ENCODE measurements at regions of chr19 and their contacts with region 1.

Region 1: DNA sequence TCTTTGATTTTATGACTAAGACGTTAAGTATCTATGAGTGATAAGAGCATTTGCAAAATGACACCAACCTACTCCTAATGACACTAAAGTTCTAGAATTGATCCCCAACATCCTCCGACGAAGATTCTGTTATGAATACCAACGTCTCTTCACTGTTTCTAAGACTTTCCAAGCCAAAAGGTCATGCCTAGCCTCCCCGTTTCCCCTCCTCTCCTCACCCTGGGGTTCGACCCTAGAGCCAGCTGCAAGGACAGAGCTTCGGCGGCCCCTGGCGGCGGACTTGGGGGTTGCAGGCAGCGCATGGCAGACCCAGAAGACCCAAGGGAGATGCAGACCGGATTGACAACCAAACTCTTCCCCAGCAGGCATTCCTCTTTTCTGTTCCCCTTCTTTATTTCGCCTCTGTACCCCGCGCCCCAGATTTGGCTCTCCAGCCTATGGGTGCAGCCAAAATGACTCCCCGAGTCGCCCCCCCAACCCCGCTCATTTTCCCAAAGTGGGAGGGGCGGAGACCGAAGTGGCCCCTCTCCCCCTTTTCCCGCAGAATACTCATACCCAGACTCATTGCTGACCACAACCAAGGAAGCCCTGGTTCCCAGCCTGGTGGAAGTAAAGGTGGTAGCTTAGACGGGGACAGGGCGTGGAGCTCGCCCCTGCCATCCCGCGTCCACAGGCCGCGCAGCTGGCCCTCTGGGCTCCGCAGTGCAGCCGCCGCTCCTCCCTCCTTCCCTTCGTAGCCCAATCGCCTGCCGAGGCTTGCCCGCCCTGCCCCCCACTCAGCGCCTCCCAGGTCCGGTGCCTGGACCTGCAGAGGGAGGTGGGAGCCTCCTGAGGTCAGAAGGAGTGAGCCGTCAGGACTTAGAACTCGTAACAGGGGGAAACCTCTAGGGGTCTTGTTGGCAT is 4.1 kb upstream of the EML2 start:
- DNase-seq: peak; percentile 84
- ATAC-seq: peak; percentile 38
- H3K4me3 ChIP-seq: peak overlapping the region; percentile 53
- H3K27ac ChIP-seq: peak overlapping the region; percentile 74
- H3K4me1 ChIP-seq: peaks cover 33% of the 10 kb centered on the region
- H3K27me3 ChIP-seq: no peaks in the 10 kb centered on the region
- CTCF ChIP-seq: peak; percentile 99 to 100 (median 99)
- EP300 ChIP-seq: peak in 1 of 2 experiments; percentile 17; a peak in 2 of 4 replicates
- POLR2A ChIP-seq: 0 out of 2 replicates have a peak, but pooled peaks have one; percentile 23
- RAD21 ChIP-seq: peak; percentile 99

Region 2: GRCh38 chr19:45059278-45059965 is 583.9 kb before region 1 on chr19:
- CTCF ChIA-PET with region 1: no interaction called
- POLR2A ChIA-PET with region 1: no interaction called
- RAD21 ChIA-PET with region 1: no interaction called
- SMC1A ChIA-PET with region 1: no interaction called
- in situ Hi-C with region 1: no loop called
- intact Hi-C with region 1: no loop called
- DNase-seq: no peak
- ATAC-seq: peak; percentile 97
- H3K4me3 ChIP-seq: no peak overlapping the region
- H3K27ac ChIP-seq: no peak overlapping the region
- H3K4me1 ChIP-seq: no peaks in the 10 kb centered on the region
- H3K27me3 ChIP-seq: no peaks in the 10 kb centered on the region
- CTCF ChIP-seq: peak; percentile 90 to 97 (median 90)
- EP300 ChIP-seq: no peak
- POLR2A ChIP-seq: no peak
- RAD21 ChIP-seq: peak; percentile 93

Region 3: GRCh38 chr19:45439569-45440254 is 203.6 kb before region 1 on chr19:
- CTCF ChIA-PET with region 1: interaction called, 23 read pairs
- POLR2A ChIA-PET with region 1: interaction called, 6 read pairs
- RAD21 ChIA-PET with region 1: interaction called, 9 read pairs
- SMC1A ChIA-PET with region 1: interaction called, 9 read pairs
- in situ Hi-C with region 1: no loop called
- intact Hi-C with region 1: loop called (anchors 5 kb)
- DNase-seq: no peak
- ATAC-seq: peak; percentile 81
- H3K4me3 ChIP-seq: peak overlapping the region; percentile 57
- H3K27ac ChIP-seq: peak overlapping the region; percentile 82
- H3K4me1 ChIP-seq: peaks cover 18% of the 10 kb centered on the region
- H3K27me3 ChIP-seq: no peaks in the 10 kb centered on the region
- CTCF ChIP-seq: peak; percentile 67 to 95 (median 94)
- EP300 ChIP-seq: no peak
- POLR2A ChIP-seq: peak; percentile 59; the same call in 1 of the 2 replicates
- RAD21 ChIP-seq: peak; percentile 77

Region 4: DNA sequence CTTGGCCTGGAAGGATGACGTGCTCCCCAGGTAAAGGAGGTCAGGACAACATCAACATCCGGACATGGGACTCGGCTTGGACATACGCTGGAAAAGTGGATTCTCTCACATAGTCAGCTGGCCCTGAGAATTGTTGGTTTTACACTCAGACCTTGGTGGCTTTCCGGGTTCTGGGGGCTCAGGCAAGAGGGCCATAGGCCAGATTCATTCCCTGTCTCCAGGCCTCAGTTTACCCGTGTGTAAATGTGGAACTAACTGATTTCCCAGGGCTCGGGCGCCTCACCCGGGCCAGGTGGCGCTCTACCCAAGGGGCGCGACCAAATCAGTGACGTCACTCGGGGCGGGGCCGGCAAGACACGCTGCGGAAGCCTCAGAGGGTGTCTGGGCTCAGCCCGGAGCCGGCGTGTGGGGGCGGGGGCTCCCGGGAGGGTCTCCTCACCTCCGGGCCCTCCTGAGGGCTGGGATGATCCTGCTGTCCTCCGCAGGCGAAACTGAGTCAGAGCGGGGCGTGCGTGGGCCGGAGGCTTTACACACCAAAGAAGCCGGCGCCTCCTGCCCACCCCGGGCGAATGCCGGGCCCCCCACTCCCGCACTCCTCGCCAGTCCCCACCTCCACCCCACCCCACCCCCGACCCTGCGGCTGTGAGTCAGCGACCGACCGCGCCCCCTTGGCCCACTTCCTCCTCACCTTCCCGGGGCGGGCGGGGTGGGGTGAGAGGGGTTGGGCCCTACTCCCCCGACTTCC is 136.9 kb before region 1 on chr19:
- CTCF ChIA-PET with region 1: interaction called, 12 read pairs
- POLR2A ChIA-PET with region 1: interaction called, 14 read pairs
- RAD21 ChIA-PET with region 1: interaction called, 5 read pairs
- SMC1A ChIA-PET with region 1: interaction called, 6 read pairs
- in situ Hi-C with region 1: no loop called
- intact Hi-C with region 1: loop called (anchors 5 kb)
- DNase-seq: peak; percentile 64
- ATAC-seq: peak; percentile 74
- H3K4me3 ChIP-seq: peak overlapping the region; percentile 99
- H3K27ac ChIP-seq: peak overlapping the region; percentile 98
- H3K4me1 ChIP-seq: peaks cover 21% of the 10 kb centered on the region
- H3K27me3 ChIP-seq: no peaks in the 10 kb centered on the region
- CTCF ChIP-seq: peak; percentile 56 to 79 (median 70)
- EP300 ChIP-seq: peak in 1 of 2 experiments; percentile 35; a peak in 1 of 4 replicates
- POLR2A ChIP-seq: peak; percentile 87
- RAD21 ChIP-seq: peak; percentile 46; the same call in 1 of the 2 replicates

Region 5: GRCh38 chr19:45558399-45558878 is 84.8 kb before region 1 on chr19:
- CTCF ChIA-PET with region 1: interaction called, 12 read pairs
- POLR2A ChIA-PET with region 1: interaction called, 5 read pairs
- RAD21 ChIA-PET with region 1: interaction called, 8 read pairs
- SMC1A ChIA-PET with region 1: no interaction called
- in situ Hi-C with region 1: no loop called
- intact Hi-C with region 1: no loop called
- DNase-seq: no peak
- ATAC-seq: peak; percentile 90
- H3K4me3 ChIP-seq: no peak overlapping the region
- H3K27ac ChIP-seq: no peak overlapping the region
- H3K4me1 ChIP-seq: peaks cover 13% of the 10 kb centered on the region
- H3K27me3 ChIP-seq: no peaks in the 10 kb centered on the region
- CTCF ChIP-seq: peak; percentile 62 to 83 (median 71)
- EP300 ChIP-seq: no peak
- POLR2A ChIP-seq: no peak
- RAD21 ChIP-seq: peak; percentile 77

Region 6: DNA sequence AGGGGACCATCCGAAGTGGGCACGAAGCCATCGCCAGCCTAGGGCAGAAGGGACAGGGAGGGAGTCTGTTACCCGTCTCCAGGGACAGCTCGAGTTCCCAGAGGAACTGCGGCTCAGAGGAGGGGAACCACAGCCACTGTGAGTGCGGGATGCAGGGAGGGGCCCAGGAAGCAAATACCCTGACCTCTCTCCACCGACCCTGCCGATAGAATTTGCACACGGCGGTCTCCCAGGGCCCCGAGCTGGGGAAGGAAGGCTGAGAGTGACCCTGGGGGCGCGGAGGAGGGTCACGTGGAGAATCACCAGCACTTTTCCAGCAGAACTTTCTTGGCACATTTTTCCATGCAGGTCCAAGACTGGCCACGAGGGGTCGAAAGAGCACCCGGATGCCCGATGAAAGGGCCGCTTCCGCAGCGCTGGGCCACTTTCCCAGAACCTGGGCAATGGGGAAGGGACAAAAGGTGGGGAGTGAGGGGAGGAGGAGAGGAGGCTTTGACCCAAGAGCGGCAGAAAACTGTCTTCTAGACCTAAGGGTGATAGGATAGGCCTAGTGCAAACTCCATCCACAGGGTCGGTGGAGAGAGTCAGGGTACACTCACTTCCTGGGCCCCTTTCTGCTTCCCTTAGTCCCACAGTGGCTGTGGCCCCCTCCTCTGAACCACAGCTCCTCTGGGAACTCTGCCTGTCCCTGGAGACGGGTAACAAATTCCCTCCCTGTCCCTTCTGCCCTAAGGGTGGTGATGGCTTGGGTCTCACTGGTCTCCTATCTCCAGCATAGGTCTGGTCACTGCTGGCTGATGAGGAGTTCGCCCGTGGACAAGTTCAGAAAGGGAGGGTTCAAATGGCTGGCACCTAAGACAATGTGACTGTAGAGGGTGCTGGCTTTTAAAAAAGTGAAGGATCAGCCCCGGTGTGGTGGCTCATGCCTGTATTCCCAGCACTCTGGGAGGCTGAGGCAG is 35.9 kb before region 1 on chr19:
- CTCF ChIA-PET with region 1: interaction called, 43 read pairs
- POLR2A ChIA-PET with region 1: interaction called, 6 read pairs
- RAD21 ChIA-PET with region 1: interaction called, 29 read pairs
- SMC1A ChIA-PET with region 1: interaction called, 27 read pairs
- in situ Hi-C with region 1: no loop called
- intact Hi-C with region 1: loop called (anchors 1 kb)
- DNase-seq: no peak
- ATAC-seq: peak; percentile 80
- H3K4me3 ChIP-seq: no peak overlapping the region
- H3K27ac ChIP-seq: peak overlapping the region; percentile 48
- H3K4me1 ChIP-seq: peaks cover 8% of the 10 kb centered on the region
- H3K27me3 ChIP-seq: peaks cover 0 to under 1% of the 10 kb centered on the region in 2 experiments; a peak in 2 of 4 replicates
- CTCF ChIP-seq: peak; percentile 80 to 85 (median 83)
- EP300 ChIP-seq: no peak
- POLR2A ChIP-seq: no peak
- RAD21 ChIP-seq: peak; percentile 66

Region 7: GRCh38 chr19:45670670-45671453 is 27.6 kb after region 1 on chr19:
- CTCF ChIA-PET with region 1: interaction called, 16 read pairs
- POLR2A ChIA-PET with region 1: interaction called, 20 read pairs
- RAD21 ChIA-PET with region 1: interaction called, 47 read pairs
- SMC1A ChIA-PET with region 1: interaction called, 15 read pairs
- in situ Hi-C with region 1: no loop called
- intact Hi-C with region 1: loop called (anchors 2 kb)
- DNase-seq: peak; percentile 62
- ATAC-seq: peak; percentile 66
- H3K4me3 ChIP-seq: peak overlapping the region; percentile 94
- H3K27ac ChIP-seq: peak overlapping the region; percentile 37; the same call in 1 of the 2 replicates
- H3K4me1 ChIP-seq: peaks cover 9% of the 10 kb centered on the region
- H3K27me3 ChIP-seq: no peaks in the 10 kb centered on the region
- CTCF ChIP-seq: no peak
- EP300 ChIP-seq: no peak
- POLR2A ChIP-seq: no peak
- RAD21 ChIP-seq: no peak

Region 8: GRCh38 chr19:45739498-45740439 is 96.5 kb after region 1 on chr19:
- CTCF ChIA-PET with region 1: no interaction called
- POLR2A ChIA-PET with region 1: no interaction called
- RAD21 ChIA-PET with region 1: no interaction called
- SMC1A ChIA-PET with region 1: no interaction called
- in situ Hi-C with region 1: no loop called
- intact Hi-C with region 1: no loop called
- DNase-seq: no peak
- ATAC-seq: peak; percentile 73
- H3K4me3 ChIP-seq: no peak overlapping the region
- H3K27ac ChIP-seq: no peak overlapping the region
- H3K4me1 ChIP-seq: no peaks in the 10 kb centered on the region
- H3K27me3 ChIP-seq: peaks cover 0 to 2% of the 10 kb centered on the region in 2 experiments; a peak in 2 of 4 replicates
- CTCF ChIP-seq: no peak
- EP300 ChIP-seq: no peak
- POLR2A ChIP-seq: no peak
- RAD21 ChIP-seq: no peak

Region 9: GRCh38 chr19:46000491-46001246 is 357.4 kb after region 1 on chr19:
- CTCF ChIA-PET with region 1: no interaction called
- POLR2A ChIA-PET with region 1: no interaction called
- RAD21 ChIA-PET with region 1: no interaction called
- SMC1A ChIA-PET with region 1: no interaction called
- in situ Hi-C with region 1: no loop called
- intact Hi-C with region 1: no loop called
- DNase-seq: no peak
- ATAC-seq: peak; percentile 98
- H3K4me3 ChIP-seq: peak overlapping the region; percentile 47; the same call in 1 of the 2 replicates
- H3K27ac ChIP-seq: no peak overlapping the region
- H3K4me1 ChIP-seq: peaks cover 14% of the 10 kb centered on the region
- H3K27me3 ChIP-seq: no peaks in the 10 kb centered on the region
- CTCF ChIP-seq: no peak
- EP300 ChIP-seq: no peak
- POLR2A ChIP-seq: no peak
- RAD21 ChIP-seq: no peak

Region 10: DNA sequence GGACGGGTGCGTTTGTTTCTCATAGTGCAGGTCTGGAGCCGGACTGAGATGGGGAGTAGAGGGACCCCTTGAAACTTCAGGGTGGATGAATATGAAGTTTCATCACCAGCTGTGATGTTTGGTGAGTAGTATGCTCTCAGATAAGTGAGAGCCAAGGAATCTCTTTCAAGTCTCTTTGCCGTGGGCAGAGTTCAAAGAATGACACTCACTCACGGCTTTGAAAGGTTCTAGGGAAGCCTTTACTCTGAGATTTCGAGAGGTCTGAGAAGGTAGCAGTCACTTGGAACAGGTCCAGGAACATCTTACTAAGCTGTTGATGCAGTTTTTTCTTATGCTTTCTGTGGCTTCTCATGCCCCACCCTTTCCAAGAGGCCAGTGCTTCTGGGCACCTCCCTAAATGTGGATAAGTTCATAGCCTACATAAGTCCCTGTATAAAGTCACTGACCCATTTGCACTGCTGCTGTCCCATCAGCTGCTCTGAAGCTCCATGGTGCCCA is 504.6 kb after region 1 on chr19 and contains the start of gene IGFL2:
- CTCF ChIA-PET with region 1: no interaction called
- POLR2A ChIA-PET with region 1: no interaction called
- RAD21 ChIA-PET with region 1: no interaction called
- SMC1A ChIA-PET with region 1: no interaction called
- in situ Hi-C with region 1: no loop called
- intact Hi-C with region 1: no loop called
- DNase-seq: no peak
- ATAC-seq: no peak
- H3K4me3 ChIP-seq: no peak within 1 kb of the TSS
- H3K27ac ChIP-seq: no peak within 1 kb of the TSS
- H3K4me1 ChIP-seq: no peaks in the 10 kb centered on the region
- H3K27me3 ChIP-seq: peaks cover 0 to 4% of the 10 kb centered on the region in 2 experiments; a peak in 1 of 4 replicates
- CTCF ChIP-seq: no peak
- EP300 ChIP-seq: no peak
- POLR2A ChIP-seq: no peak
- RAD21 ChIP-seq: no peak
- polyA plus RNA-seq, gene IGFL2: not detected